ENCODE measurements at regions of chr4 and their contacts with region 1.

Region 1: GRCh38 chr4:71009890-71010588 is 16.6 kb downstream of the DCK start:
- DNase-seq: no peak
- ATAC-seq: peak in 1 of 4 donors; percentile 56
- H3K4me3 ChIP-seq: no peak overlapping the region
- H3K27ac ChIP-seq: no peak overlapping the region
- H3K4me1 ChIP-seq: peaks cover 0 to 18% (median 0%) of the 10 kb centered on the region in 12 donors
- H3K27me3 ChIP-seq: no peaks in the 10 kb centered on the region
- CTCF ChIP-seq: peak; percentile 57 to 79 (median 64)
- POLR2A ChIP-seq: no peak

Region 2: GRCh38 chr4:70637239-70637913 is 372.7 kb before region 1 on chr4:
- intact Hi-C with region 1: loop called in 1 of 10 experiments (anchors 10 kb)
- DNase-seq: no peak
- ATAC-seq: peak; percentile 75 to 90 (median 90)
- H3K4me3 ChIP-seq: peak overlapping the region in 9 of 12 donors; percentile 9 to 40 (median 29)
- H3K27ac ChIP-seq: peak overlapping the region; percentile 41 to 85 (median 70)
- H3K4me1 ChIP-seq: peaks cover 0 to 16% (median 0%) of the 10 kb centered on the region in 12 donors
- H3K27me3 ChIP-seq: no peaks in the 10 kb centered on the region
- CTCF ChIP-seq: no peak
- POLR2A ChIP-seq: no peak

Region 3: DNA sequence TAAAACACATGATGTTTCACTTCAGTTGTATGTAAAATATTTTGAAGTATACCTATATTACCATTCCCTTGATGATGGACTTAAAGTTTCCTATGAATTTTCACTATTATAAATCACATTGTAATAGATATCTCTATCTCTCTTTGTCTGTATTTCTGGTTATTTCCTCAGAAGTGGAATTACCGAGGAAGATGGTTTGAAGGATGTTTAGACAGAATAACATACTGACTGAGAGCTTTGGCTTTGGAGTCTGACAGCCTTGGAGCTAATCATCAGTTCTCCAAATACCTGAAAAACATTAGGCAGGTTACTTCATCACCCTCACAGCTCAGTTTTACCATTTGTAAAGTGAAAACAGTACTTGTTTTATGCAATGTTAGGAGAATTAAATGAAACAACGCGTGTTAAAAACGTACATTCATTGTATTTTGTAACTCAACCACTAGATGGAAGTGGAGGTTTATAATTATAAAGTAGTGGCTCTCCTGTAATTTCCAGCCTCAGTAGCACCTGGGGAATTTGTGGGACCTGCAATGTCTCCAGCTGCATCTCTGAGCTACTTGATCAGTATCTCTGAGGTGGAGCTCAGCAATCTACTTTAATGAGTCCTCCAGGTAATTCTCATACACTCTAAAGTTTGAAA is 358.1 kb before region 1 on chr4:
- intact Hi-C with region 1: loop called in 9 of 10 experiments (anchors 2 to 10 kb)
- DNase-seq: no peak
- ATAC-seq: peak in 3 of 4 donors; percentile 26 to 60 (median 34)
- H3K4me3 ChIP-seq: no peak overlapping the region
- H3K27ac ChIP-seq: no peak overlapping the region
- H3K4me1 ChIP-seq: peaks cover 0 to 6% (median 0%) of the 10 kb centered on the region in 12 donors
- H3K27me3 ChIP-seq: peaks cover 0 to 5% (median 0%) of the 10 kb centered on the region in 9 donors
- CTCF ChIP-seq: peak; percentile 37 to 65 (median 56)
- POLR2A ChIP-seq: no peak

Region 4: GRCh38 chr4:70948665-70949260 is 61.3 kb before region 1 on chr4:
- intact Hi-C with region 1: no loop called
- DNase-seq: no peak
- ATAC-seq: peak in 1 of 4 donors; percentile 31
- H3K4me3 ChIP-seq: no peak overlapping the region
- H3K27ac ChIP-seq: peak overlapping the region in 1 of 12 donors; percentile 78
- H3K4me1 ChIP-seq: peaks cover 0 to 61% (median 0%) of the 10 kb centered on the region in 12 donors
- H3K27me3 ChIP-seq: no peaks in the 10 kb centered on the region
- CTCF ChIP-seq: peak in 1 of 12 donors; percentile 20
- POLR2A ChIP-seq: no peak

Measured in heart left ventricle (tissue), 16 donors.